A549 (cell line): ENCODE measurements at regions of chr3 and their contacts with region 1.

Region 1: GRCh38 chr3:131794766-131795388 is 239.9 kb downstream of the CPNE4 start:
- DNase-seq: peak; percentile 18 to 59
- ATAC-seq: peak; percentile 87 to 95
- H3K4me3 ChIP-seq: no peak overlapping the region
- H3K27ac ChIP-seq: no peak overlapping the region
- H3K4me1 ChIP-seq: no peaks in the 10 kb centered on the region
- CTCF ChIP-seq: peak; percentile 74
- EP300 ChIP-seq: no peak
- POLR2A ChIP-seq: no peak
- RAD21 ChIP-seq: peak; percentile 80 to 83

Region 2: DNA sequence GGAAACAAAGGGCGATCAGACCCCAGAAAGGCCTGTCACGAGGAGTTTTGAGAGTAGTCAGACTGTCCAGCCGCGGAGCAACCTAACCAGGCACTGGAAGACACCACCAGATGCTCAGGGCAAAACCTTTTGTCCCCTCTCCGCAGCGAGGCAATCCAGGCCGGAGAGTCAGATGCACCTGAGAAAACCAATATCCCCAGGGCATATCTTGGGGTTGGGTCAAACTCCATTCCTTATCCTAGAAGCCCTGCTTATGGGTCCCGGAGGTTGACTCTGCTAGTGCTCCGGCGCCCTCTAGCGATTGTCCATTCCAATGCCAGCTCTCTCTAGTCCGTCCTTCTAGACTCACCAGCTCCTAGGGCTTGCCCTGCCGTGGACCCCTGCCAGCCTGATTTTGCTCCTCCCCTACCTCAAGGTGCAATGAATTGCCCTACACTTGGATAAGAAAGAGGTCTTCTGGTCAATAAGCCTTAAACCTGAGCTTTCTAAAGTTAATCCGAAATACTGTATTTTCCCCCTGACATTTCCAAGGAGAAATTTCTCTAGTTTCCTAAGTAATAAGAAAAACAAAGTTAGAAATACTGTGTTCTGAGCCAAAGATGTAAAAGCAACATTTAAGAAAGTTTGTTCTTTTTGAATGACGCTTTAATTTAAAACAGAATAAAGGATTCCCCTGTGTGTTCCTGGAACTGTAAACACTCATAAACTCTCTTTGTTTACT is 234.5 kb after region 1 on chr3:
- CTCF ChIA-PET with region 1: interaction called, 68 read pairs
- POLR2A ChIA-PET with region 1: no interaction called
- DNase-seq: peak; percentile 66 to 82
- ATAC-seq: peak; percentile 96 to 100
- H3K4me3 ChIP-seq: no peak overlapping the region
- H3K27ac ChIP-seq: 0 out of 6 replicates have a peak overlapping the region, but pooled peaks of 1 of the 2 experiments have one; percentile 22
- H3K4me1 ChIP-seq: peaks cover 29% of the 10 kb centered on the region
- CTCF ChIP-seq: peak; percentile 84
- EP300 ChIP-seq: no peak
- POLR2A ChIP-seq: no peak
- RAD21 ChIP-seq: peak; percentile 88 to 93

Region 3: GRCh38 chr3:132210476-132211346 is 415.8 kb after region 1 on chr3:
- CTCF ChIA-PET with region 1: interaction called, 15 read pairs
- POLR2A ChIA-PET with region 1: no interaction called
- DNase-seq: peak; percentile 19 to 44
- ATAC-seq: peak; percentile 70 to 88; a peak in 5 of 6 replicates
- H3K4me3 ChIP-seq: no peak overlapping the region
- H3K27ac ChIP-seq: no peak overlapping the region
- H3K4me1 ChIP-seq: peaks cover 12% of the 10 kb centered on the region; the same call in 2 of the 3 replicates
- CTCF ChIP-seq: peak; percentile 76
- EP300 ChIP-seq: no peak
- POLR2A ChIP-seq: no peak
- RAD21 ChIP-seq: peak; percentile 75 to 90